Right ventricle myocardium superior (tissue), 1 donor: ENCODE measurements at regions of chr4 and their contacts with region 1.

Region 1: DNA sequence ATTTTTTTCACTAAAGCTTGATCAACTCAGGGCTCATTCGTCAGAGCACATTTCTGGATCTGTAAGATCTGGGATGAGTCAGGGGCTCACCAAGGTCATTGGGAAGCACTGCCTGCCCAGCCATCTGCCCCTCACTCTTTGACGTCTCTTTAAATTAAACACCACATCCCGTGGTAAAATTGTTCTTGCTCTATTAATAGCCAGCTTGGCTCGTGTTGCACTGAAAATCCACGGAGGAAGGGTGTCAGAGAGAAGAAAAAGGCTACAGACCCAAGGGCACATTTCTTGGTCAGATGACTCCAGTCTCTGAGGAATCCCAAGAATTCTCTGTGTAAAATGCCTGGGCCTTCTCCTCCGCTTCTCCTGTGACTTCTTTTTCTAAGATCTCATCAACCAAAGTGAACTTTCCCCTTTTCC is 45.7 kb upstream of the GATB start:
- DNase-seq: no peak
- ATAC-seq: peak; percentile 86

Region 2: DNA sequence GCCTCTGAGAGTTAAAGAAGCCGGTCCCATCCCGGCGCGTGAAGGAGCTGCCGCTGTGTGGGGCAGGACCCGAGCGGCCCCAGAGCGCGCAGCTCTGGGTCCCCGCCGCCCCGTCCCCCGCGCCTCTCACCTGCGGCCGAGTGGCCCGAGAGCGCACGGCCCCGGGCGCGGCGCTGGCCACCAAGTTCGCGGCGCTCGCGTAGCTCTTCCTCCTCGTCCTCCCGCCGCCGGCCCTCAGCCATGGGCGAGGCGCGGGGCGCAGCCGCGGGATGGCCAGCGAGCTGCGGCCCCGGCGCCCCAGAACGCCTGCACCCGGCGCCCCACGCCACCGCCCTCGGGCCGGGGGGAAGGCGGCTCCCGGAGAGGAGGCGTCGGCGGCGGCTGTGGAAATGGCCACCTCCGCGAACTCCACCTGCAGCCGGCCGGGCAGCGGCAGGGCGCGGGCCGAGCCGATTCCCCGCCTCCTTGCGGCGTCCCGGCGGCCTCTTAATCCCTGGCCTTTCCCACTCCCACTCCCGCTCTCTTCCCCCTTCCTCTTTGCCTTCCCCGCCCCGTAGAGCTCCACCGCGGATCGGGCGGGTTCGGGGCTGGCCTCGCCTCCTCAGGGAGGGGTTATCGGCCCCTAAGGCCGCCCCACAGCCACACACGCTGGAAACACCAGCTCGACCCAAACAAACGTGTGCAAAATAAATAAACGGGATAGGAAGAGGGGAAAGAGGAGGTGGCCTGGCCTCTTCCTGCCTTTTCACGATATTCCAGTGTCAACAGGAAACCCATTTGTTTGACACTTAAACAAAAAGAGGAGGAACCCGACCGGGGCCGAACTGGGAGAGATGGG is 481.2 kb before region 1 on chr4 and contains the start of gene SH3D19:
- intact Hi-C with region 1: no loop called
- DNase-seq: peak; percentile 84
- ATAC-seq: peak; percentile 91
- total RNA-seq, gene SH3D19: 96.7 TPM

Region 3: DNA sequence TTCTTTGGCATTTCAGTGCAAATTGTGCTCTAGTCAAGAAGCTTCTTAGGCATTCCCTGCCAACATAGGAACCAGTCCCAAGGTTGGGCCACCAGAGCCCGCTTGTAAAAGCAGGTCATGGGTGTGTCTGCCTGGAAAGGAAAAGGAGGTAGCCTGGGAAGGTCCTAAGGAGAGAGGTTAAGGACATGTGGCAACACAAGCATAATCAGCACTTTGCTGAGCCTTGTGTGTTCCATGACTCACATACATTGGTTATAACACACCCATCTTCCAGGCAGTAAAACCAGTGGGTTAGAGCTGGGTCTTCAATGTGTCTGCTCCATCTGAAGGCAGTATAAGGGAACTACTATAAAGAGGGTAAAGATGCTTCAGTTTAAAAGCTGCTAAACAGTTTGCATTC is 232.6 kb before region 1 on chr4:
- intact Hi-C with region 1: no loop called
- DNase-seq: no peak
- ATAC-seq: peak; percentile 33

Region 4: GRCh38 chr4:151688003-151688784 is 118.3 kb before region 1 on chr4:
- intact Hi-C with region 1: loop called (anchors 5 kb)
- DNase-seq: no peak
- ATAC-seq: peak; percentile 45